Activated T-helper 2 cell treated with anti-CD3 and anti-CD28 coated beads, Interferon-gamma antibody, Interleukin-2, Interleukin-4, amounts not matched to agents 10 μg/mL and 5 μg/mL and 100 μg/mL, durations not matched to agents 14 hours and 24 hours and 36 hours (primary cell): ENCODE measurements at regions of chr13 and their contacts with region 1.

Region 1: DNA sequence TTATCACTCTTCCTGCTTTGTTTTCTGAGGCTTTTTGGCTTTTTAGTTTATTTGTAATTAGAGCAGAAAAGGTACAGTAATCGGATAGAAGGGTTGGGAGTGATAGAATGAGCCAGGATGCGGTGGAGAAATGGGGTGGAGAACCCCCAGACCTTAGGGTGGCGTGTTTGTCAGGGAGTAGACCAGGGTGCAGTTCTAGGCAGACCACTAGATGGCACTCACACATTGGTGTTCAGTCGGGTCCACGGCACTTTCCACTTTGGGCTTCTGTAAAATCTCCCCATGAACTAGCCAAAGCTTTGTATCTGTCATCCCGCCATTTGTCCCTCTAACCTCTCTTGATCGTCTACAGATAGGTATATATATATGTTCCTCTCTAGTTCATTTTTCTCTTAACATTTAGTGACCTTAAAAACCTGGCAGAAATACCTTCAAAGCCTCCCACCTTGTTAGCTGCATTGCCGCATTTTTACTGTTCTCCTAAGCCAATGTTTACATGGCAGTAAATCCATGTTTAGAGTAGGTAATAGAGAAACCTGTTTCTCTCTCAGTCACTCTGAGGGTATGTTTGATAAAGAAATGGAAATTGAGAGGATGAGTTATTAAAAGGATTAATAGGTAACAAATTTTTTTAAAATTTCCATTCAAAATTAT is 154.9 kb downstream of the TM9SF2 start:
- DNase-seq: peak; percentile 71
- H3K4me3 Mint-ChIP-seq: peak overlapping the region; percentile 9
- H3K27ac Mint-ChIP-seq: no peak overlapping the region
- H3K4me1 Mint-ChIP-seq: peaks cover 38% of the 10 kb centered on the region
- H3K27me3 Mint-ChIP-seq: peaks cover 46% of the 10 kb centered on the region

Region 2: GRCh38 chr13:99558570-99559180 is 97.5 kb before region 1 on chr13:
- intact Hi-C with region 1: no loop called
- DNase-seq: no peak
- H3K4me3 Mint-ChIP-seq: no peak overlapping the region
- H3K27ac Mint-ChIP-seq: no peak overlapping the region
- H3K4me1 Mint-ChIP-seq: peaks cover 12% of the 10 kb centered on the region
- H3K27me3 Mint-ChIP-seq: no peaks in the 10 kb centered on the region

Region 3: GRCh38 chr13:99640260-99640659 is 16.0 kb before region 1 on chr13:
- intact Hi-C with region 1: no loop called
- DNase-seq: no peak
- H3K4me3 Mint-ChIP-seq: no peak overlapping the region
- H3K27ac Mint-ChIP-seq: no peak overlapping the region
- H3K4me1 Mint-ChIP-seq: no peaks in the 10 kb centered on the region
- H3K27me3 Mint-ChIP-seq: peaks cover 3% of the 10 kb centered on the region

Region 4: GRCh38 chr13:99724633-99725517 is 68.7 kb after region 1 on chr13:
- intact Hi-C with region 1: no loop called
- DNase-seq: no peak
- H3K4me3 Mint-ChIP-seq: no peak overlapping the region
- H3K27ac Mint-ChIP-seq: no peak overlapping the region
- H3K4me1 Mint-ChIP-seq: no peaks in the 10 kb centered on the region
- H3K27me3 Mint-ChIP-seq: no peaks in the 10 kb centered on the region

Region 5: GRCh38 chr13:99895223-99895994 is 239.2 kb after region 1 on chr13:
- intact Hi-C with region 1: loop called (anchors 5 kb)
- DNase-seq: no peak
- H3K4me3 Mint-ChIP-seq: peak overlapping the region; percentile 55
- H3K27ac Mint-ChIP-seq: no peak overlapping the region
- H3K4me1 Mint-ChIP-seq: peaks cover 4% of the 10 kb centered on the region
- H3K27me3 Mint-ChIP-seq: peaks cover 65% of the 10 kb centered on the region

Region 6: GRCh38 chr13:99980201-99980823 is 324.1 kb after region 1 on chr13:
- intact Hi-C with region 1: loop called (anchors 5 kb)
- DNase-seq: no peak
- H3K4me3 Mint-ChIP-seq: no peak overlapping the region
- H3K27ac Mint-ChIP-seq: no peak overlapping the region
- H3K4me1 Mint-ChIP-seq: no peaks in the 10 kb centered on the region
- H3K27me3 Mint-ChIP-seq: peaks cover 66% of the 10 kb centered on the region

Region 7: DNA sequence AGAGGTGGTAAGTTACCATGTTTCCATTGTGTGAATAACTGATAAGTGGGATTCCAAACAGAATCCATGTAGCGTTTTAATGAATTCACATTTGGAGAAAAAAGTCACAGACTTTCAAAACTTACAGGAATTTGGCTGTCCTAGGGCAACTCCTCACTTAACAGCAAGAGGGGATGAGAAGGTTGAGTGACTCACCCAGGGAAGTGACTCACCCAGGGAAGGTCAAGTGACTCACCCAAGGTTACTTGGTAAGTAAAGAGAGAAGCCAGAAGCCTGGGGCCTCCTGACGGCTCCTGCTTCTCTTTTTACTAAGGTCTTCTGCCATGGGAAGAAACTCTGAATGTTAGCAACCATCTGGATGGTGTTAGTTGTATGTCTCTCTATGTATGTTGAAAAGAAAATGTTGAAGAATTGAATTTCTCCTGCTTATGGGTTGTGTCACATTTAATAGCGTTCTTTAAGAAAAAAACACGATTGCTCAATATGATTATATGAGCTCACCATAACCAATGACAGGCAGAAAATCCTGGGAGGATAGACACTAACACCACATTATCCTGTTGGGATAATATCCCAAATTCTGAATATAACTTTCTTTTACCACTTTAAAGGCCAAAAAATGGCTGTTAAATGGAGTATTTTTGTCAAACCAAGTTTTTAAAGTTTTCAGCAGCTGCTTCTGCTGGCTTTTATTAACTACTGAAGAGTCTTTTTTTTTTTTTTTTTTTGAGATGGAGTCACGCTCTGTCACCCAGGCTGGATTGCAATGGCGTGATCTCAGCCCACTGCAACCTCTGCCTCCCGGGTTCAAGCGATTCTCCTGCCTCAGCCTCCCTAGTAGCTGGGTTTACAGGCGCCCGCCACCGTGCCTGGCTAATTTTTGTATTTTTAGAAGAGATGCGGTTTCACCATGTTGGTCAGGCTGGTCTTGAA is 736.8 kb after region 1 on chr13:
- intact Hi-C with region 1: loop called (anchors 1 kb)
- DNase-seq: peak; percentile 41
- H3K4me3 Mint-ChIP-seq: peak overlapping the region; percentile 11
- H3K27ac Mint-ChIP-seq: peak overlapping the region; percentile 67
- H3K4me1 Mint-ChIP-seq: peaks cover 30% of the 10 kb centered on the region
- H3K27me3 Mint-ChIP-seq: no peaks in the 10 kb centered on the region

Region 8: GRCh38 chr13:100514788-100515409 is 858.7 kb after region 1 on chr13:
- intact Hi-C with region 1: loop called (anchors 2 kb)
- DNase-seq: peak; percentile 51
- H3K4me3 Mint-ChIP-seq: no peak overlapping the region
- H3K27ac Mint-ChIP-seq: no peak overlapping the region
- H3K4me1 Mint-ChIP-seq: peaks cover 19% of the 10 kb centered on the region
- H3K27me3 Mint-ChIP-seq: peaks cover 35% of the 10 kb centered on the region